ENCODE measurements at regions of chr19 and their contacts with region 1.

Region 1: DNA sequence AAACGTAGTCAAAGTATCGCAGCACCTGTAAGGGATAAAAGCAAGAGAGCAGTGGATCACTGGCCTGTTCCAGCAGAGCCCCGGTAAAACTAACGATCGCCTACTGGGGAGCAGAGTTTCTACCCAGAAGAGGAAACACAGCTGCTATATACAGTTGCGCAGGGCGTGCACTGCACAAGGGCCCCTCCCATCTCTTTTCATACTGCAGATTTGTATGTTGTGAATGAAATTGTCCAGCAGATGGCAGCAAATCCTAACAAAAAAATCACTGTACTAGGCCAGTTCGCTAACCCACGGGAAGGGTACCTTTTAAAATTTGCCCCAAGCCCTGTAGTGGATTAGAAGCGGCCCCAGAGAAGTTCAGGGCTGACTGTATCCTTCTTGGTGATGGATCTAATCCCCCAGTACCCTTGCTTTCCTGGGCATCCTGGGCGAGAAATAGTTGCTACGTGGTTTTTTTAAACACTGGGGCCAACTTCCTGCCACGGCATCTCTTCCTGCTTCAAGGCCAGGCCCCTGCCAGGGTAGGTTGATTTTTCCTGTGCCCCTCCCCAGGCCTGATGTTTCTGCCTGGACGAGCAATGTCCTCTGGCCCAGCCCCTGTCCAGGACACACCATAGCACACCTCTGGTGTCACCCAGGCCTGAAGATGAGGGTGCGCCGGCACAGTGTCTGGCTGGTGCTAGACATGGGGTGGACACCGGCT is 127.0 kb downstream of the IER2 start:
- DNase-seq: peak; percentile 74
- ATAC-seq: peak; percentile 95
- H3K4me3 ChIP-seq: no peak overlapping the region
- H3K27ac ChIP-seq: no peak overlapping the region
- H3K4me1 ChIP-seq: no peaks in the 10 kb centered on the region
- H3K27me3 ChIP-seq: no peaks in the 10 kb centered on the region; the same call in 1 of the 2 replicates
- CTCF ChIP-seq: peak; percentile 73
- POLR2A ChIP-seq: no peak
- RAD21 ChIP-seq: peak; percentile 76

Region 2: DNA sequence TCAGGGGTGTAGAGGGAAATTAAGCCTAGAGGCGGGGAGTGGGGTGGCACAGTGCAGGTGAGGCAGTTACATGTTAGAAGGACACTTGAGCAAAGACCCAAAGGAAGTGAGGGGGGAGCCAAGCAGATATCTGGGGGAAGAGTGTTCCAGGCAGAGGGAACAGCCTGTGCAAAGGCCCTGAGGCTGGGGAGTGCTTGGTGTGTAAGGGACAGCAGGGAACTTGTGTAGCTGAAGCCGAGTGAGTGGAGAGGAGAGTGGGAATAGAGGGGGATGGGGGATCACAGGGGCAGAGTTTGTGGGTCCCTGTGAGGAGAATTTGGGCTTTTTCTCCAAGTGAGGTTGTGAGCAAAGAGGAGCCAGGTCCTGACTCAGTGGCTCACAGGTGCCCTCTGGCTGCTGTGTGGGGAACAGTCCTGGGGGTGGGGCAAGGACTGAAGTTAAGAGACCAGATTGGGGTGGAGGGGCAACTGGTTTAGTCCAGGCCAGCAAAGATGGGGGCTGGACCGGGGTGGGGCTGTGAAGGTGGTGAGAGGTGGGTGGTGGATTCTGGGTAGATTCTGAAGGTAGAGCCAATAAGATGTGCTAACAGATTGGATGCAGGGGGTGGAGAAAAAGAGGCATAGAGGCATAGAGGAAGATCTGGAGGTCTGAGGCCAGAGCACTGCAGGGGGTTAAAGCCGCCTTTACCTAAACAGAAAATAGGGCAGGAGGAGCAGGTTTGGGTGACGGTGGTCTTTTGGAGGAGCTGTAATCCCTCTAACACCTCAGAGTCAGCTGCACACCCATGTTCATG is 153.7 kb after region 1 on chr19:
- CTCF ChIA-PET with region 1: interaction called, 3 read pairs
- POLR2A ChIA-PET with region 1: no interaction called
- dilution Hi-C with region 1: no loop called
- in situ Hi-C with region 1: no loop called
- intact Hi-C with region 1: loop called (anchors 1 kb)
- DNase-seq: peak; percentile 42
- ATAC-seq: peak; percentile 91
- H3K4me3 ChIP-seq: no peak overlapping the region
- H3K27ac ChIP-seq: no peak overlapping the region
- H3K4me1 ChIP-seq: no peaks in the 10 kb centered on the region
- H3K27me3 ChIP-seq: no peaks in the 10 kb centered on the region
- CTCF ChIP-seq: peak; percentile 78
- POLR2A ChIP-seq: no peak
- RAD21 ChIP-seq: peak; percentile 80

Region 3: GRCh38 chr19:13588957-13589833 is 311.9 kb after region 1 on chr19:
- CTCF ChIA-PET with region 1: interaction called, 9 read pairs
- POLR2A ChIA-PET with region 1: interaction called, 8 read pairs
- dilution Hi-C with region 1: no loop called
- in situ Hi-C with region 1: loop called (anchors 5 kb)
- intact Hi-C with region 1: loop called (anchors 1 kb)
- DNase-seq: peak; percentile 41
- ATAC-seq: peak; percentile 100
- H3K4me3 ChIP-seq: no peak overlapping the region
- H3K27ac ChIP-seq: no peak overlapping the region
- H3K4me1 ChIP-seq: no peaks in the 10 kb centered on the region
- H3K27me3 ChIP-seq: peaks cover 5% of the 10 kb centered on the region
- CTCF ChIP-seq: peak; percentile 94
- POLR2A ChIP-seq: no peak
- RAD21 ChIP-seq: peak; percentile 88

Region 4: DNA sequence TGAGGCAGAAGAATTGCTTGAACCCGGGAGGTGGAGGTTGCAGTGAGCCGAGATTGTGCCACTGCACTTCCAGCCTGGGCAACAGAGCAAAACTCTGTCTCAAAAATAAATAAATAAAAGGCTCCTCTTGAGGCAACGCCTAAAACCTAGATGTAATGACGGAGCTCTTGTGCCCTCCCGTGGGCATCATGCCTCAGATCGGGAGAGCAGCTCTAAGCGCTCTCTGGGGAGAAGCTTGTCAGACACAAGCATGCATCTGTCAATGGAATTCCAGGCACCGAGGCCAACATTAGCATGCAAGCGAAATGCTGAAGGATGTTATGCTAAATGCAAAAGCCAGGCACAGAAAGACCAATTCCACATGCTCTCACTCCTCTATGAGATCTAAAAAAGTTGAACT is 441.5 kb after region 1 on chr19:
- CTCF ChIA-PET with region 1: no interaction called
- POLR2A ChIA-PET with region 1: no interaction called
- dilution Hi-C with region 1: no loop called
- in situ Hi-C with region 1: loop called (anchors 25 kb)
- intact Hi-C with region 1: loop called (anchors 1 kb)
- DNase-seq: peak; percentile 66
- ATAC-seq: peak; percentile 75
- H3K4me3 ChIP-seq: no peak overlapping the region
- H3K27ac ChIP-seq: no peak overlapping the region
- H3K4me1 ChIP-seq: peaks cover 3% of the 10 kb centered on the region
- H3K27me3 ChIP-seq: no peaks in the 10 kb centered on the region
- CTCF ChIP-seq: peak; percentile 50
- POLR2A ChIP-seq: no peak
- RAD21 ChIP-seq: peak; percentile 61

Region 5: DNA sequence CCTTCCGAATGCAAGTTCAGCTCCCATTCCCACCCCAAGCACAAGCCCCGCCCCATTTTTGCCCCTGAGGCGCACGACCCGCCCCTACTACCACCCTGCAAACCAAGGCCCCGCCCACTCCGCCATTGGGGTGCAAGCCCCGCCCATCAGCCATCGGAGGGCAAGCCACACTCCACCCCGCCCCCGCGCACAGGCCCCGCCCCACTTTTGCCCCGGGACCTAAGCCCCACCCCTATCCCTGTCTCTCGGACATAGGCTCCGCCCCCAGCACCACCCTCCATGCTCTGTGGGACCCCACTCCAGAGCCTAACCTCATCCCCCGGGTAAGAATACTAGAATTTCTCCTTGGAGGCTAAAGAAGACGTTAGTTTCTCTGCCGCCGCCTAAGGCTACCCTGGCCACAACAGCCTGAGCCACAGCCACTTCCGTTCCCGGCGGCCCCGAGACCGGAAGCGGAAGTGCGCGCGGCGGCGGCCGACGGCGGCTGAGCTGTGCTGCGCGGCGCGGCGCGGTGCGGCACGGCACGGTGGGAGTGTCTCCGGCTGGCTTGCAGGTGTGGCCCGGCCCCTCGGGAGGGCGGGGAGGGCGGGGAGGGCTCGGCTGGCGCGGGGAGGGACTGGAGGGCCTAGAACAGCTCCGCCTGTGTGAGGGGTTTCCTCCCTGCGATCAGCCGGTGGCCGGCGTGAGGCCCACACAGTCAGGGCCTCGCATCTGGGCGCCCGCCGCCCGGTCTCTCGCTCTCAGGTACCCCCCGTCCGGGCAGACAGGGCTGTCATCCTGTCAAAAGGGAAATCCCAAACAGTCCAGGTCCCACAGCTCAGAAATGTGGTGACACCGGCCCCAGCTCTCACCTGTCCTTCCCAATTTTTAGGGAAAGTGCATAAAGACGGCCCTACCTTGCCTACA is 1412.6 kb after region 1 on chr19 and contains the start of gene ZNF333:
- CTCF ChIA-PET with region 1: no interaction called
- POLR2A ChIA-PET with region 1: interaction called, 22 read pairs
- dilution Hi-C with region 1: no loop called
- in situ Hi-C with region 1: no loop called
- intact Hi-C with region 1: no loop called
- DNase-seq: peak; percentile 83
- ATAC-seq: peak; percentile 98
- H3K4me3 ChIP-seq: peak within 1 kb of the TSS; percentile 97
- H3K27ac ChIP-seq: peak within 1 kb of the TSS; percentile 99
- H3K4me1 ChIP-seq: no peaks in the 10 kb centered on the region
- H3K27me3 ChIP-seq: no peaks in the 10 kb centered on the region
- CTCF ChIP-seq: no peak
- POLR2A ChIP-seq: peak; percentile 84
- RAD21 ChIP-seq: no peak
- total RNA-seq, gene ZNF333: 11.9 and 15.1 TPM in 2 replicates